ENCODE measurements at regions of chr3 and their contacts with region 1.

Region 1: DNA sequence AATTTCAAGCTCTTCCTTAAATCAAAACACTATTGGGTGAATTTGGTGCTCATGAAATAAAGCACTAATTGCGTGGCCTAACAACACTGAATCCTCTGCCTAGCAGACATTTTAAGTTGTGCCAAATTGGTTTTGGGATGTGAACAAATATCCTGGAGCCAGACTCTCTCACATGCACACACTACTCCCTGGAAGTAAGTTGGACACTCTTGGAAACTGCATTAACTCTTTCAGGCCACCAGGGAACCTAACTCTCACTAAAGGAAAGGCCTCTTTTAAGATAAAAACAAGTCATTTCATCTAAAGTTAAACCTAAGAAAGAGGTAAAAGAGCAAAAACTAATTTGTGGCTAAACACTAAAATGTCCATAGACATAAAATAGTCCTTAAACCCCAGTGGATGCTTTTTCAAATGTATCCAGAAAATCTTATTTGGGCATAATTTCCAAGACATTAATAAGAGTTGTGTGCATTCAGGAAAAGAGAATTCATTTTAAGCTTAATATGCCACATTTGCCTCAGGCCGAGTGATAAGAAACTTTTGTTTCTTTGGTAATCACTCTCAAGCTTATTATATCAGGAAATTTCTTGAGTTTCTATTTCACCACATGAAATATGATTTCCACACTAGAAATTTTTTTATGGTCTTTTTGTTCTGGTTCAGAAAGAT is 61.8 kb downstream of the ZBTB20 start:
- DNase-seq: no peak
- ATAC-seq: peak; percentile 38 to 51
- H3K4me3 ChIP-seq: peak overlapping the region in 1 of 4 donors; percentile 1
- H3K27ac ChIP-seq: peak overlapping the region; percentile 4 to 43 (median 30)
- H3K4me1 ChIP-seq: peaks cover 50 to 80% of the 10 kb centered on the region in 2 donors
- H3K27me3 ChIP-seq: no peaks in the 10 kb centered on the region
- CTCF ChIP-seq: peak in 1 of 5 experiments; percentile 22
- POLR2A ChIP-seq: no peak

Region 2: DNA sequence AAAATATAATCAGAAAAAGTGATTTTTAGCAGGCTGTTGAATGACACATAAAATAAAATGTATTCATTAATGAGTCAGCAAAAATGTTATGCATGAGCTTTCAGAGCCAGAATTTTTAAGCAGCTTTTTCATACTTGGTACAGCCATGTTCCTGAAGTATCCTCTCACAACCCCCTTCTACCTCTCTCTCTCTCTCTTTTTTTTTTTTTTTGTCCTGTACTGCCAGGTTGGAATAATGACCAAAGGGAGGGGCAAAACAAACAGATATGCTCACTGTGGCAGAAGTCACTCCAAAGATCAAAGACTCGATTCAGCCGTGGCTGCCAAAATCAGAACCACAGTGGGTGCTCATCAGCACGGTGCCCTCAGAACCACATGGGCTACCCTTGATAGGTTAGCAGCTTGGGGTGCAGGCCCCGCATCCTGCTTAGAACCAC is 321.3 kb before region 1 on chr3:
- in situ Hi-C with region 1: no loop called
- intact Hi-C with region 1: no loop called
- DNase-seq: no peak
- ATAC-seq: no peak
- H3K4me3 ChIP-seq: no peak overlapping the region
- H3K27ac ChIP-seq: no peak overlapping the region
- H3K4me1 ChIP-seq: peaks cover 29 to 57% of the 10 kb centered on the region in 2 donors
- H3K27me3 ChIP-seq: no peaks in the 10 kb centered on the region
- CTCF ChIP-seq: no peak
- POLR2A ChIP-seq: no peak

Region 3: DNA sequence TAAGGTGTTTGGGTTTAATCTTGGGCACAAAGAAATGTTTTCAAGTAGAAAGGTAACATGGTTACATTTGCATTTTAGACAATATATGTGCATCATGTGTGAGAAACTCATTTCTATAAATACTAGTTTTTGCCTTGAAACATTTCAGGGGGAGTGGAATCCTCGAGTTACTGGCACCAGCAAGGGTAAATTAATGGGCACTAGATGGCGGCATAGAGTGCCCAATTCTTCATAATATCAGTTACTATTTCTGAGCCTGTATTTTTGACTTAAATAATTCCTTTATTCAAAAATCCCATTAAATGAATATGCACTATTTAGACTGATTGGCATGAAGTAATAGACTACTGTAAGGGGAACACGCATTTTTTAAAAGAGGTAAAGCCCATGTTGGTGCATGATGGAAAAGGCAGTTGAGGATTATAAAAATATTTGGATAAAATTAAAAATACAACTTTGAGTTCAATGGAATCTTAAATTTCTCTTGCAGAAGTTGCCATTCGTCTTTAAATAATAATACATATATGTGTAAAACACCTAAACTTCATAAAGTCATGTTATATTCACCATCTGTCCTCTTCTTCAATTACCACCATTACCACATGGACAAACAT is 44.6 kb before region 1 on chr3:
- in situ Hi-C with region 1: no loop called
- intact Hi-C with region 1: loop called (anchors 5 kb)
- DNase-seq: no peak
- ATAC-seq: peak in 1 of 2 donors; percentile 44
- H3K4me3 ChIP-seq: no peak overlapping the region
- H3K27ac ChIP-seq: no peak overlapping the region
- H3K4me1 ChIP-seq: peaks cover 0 to 6% of the 10 kb centered on the region in 2 donors
- H3K27me3 ChIP-seq: no peaks in the 10 kb centered on the region
- CTCF ChIP-seq: peak in 4 of 5 experiments; percentile 14 to 63 (median 38)
- POLR2A ChIP-seq: no peak

Region 4: DNA sequence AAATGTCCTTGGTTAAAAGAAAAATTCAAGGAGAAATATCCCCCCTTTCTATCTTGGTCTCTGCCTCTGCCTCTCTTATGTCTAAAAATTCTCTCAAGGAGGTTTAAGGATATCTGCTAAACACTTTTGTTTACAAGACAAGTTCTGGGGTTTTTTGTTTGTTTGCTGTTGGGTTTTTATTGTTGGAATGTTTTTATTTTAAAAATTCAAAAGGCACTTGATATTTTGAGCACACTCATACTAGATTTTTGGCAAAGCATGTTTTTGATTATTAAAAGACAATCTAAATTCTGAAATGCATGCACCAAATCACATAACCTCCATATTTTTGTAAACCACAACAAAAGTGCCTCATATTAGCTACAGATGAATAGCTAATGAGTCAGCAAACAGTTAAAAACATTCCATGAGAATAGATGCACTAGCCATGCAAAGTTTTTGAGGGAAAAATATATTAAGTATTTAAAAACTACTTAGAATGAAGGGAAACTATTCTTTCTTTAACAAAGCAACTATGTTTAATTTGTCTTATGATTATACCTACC is 22.8 kb before region 1 on chr3:
- in situ Hi-C with region 1: no loop called
- intact Hi-C with region 1: no loop called
- DNase-seq: no peak
- ATAC-seq: no peak
- H3K4me3 ChIP-seq: no peak overlapping the region
- H3K27ac ChIP-seq: no peak overlapping the region
- H3K4me1 ChIP-seq: peaks cover 6 to 12% of the 10 kb centered on the region in 2 donors
- H3K27me3 ChIP-seq: no peaks in the 10 kb centered on the region
- CTCF ChIP-seq: no peak
- POLR2A ChIP-seq: no peak